A673 (cell line): ENCODE measurements at regions of chr20 and their contacts with region 1.

Region 1: DNA sequence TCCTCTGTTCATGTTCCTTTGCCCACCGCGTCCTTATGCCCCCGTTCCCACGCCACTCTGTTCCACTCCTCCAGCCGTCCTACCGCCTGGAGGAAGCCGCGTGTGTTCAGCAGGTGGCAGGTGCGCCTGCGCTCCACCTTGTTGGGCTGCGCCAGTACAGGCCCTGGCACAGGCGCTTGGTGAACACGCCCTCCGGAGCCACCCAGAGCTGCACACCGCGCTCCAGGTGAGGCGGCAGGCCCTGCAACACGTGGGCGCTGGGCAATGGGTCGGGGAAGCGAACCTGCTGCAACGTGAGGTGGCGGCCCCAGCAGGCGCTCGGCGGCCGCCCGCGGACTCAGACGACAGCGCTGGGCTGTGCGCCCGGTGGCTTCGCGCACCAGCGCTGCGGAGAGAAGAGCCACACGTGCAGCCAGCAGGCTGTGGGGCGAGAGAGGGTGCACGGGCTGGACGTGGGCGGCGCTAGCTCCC is 4.1 kb upstream of the FOXS1 start:
- DNase-seq: no peak
- H3K4me3 ChIP-seq: no peak overlapping the region
- H3K27ac ChIP-seq: no peak overlapping the region
- H3K4me1 ChIP-seq: no peaks in the 10 kb centered on the region
- H3K27me3 ChIP-seq: peaks cover 32% of the 10 kb centered on the region
- CTCF ChIP-seq: no peak

Region 2: GRCh38 chr20:31760519-31761240 is 88.8 kb before region 1 on chr20:
- CTCF ChIA-PET with region 1: no interaction called
- POLR2A ChIA-PET with region 1: no interaction called
- intact Hi-C with region 1: no loop called
- DNase-seq: no peak
- H3K4me3 ChIP-seq: no peak overlapping the region
- H3K27ac ChIP-seq: no peak overlapping the region
- H3K4me1 ChIP-seq: no peaks in the 10 kb centered on the region
- H3K27me3 ChIP-seq: no peaks in the 10 kb centered on the region
- CTCF ChIP-seq: no peak

Region 3: GRCh38 chr20:31822421-31823330 is 26.8 kb before region 1 on chr20:
- CTCF ChIA-PET with region 1: interaction called, 11 read pairs
- POLR2A ChIA-PET with region 1: no interaction called
- intact Hi-C with region 1: loop called (anchors 2 kb)
- DNase-seq: peak; percentile 77
- H3K4me3 ChIP-seq: no peak overlapping the region
- H3K27ac ChIP-seq: no peak overlapping the region
- H3K4me1 ChIP-seq: peaks cover 9% of the 10 kb centered on the region
- H3K27me3 ChIP-seq: no peaks in the 10 kb centered on the region
- CTCF ChIP-seq: peak; percentile 99

Region 4: DNA sequence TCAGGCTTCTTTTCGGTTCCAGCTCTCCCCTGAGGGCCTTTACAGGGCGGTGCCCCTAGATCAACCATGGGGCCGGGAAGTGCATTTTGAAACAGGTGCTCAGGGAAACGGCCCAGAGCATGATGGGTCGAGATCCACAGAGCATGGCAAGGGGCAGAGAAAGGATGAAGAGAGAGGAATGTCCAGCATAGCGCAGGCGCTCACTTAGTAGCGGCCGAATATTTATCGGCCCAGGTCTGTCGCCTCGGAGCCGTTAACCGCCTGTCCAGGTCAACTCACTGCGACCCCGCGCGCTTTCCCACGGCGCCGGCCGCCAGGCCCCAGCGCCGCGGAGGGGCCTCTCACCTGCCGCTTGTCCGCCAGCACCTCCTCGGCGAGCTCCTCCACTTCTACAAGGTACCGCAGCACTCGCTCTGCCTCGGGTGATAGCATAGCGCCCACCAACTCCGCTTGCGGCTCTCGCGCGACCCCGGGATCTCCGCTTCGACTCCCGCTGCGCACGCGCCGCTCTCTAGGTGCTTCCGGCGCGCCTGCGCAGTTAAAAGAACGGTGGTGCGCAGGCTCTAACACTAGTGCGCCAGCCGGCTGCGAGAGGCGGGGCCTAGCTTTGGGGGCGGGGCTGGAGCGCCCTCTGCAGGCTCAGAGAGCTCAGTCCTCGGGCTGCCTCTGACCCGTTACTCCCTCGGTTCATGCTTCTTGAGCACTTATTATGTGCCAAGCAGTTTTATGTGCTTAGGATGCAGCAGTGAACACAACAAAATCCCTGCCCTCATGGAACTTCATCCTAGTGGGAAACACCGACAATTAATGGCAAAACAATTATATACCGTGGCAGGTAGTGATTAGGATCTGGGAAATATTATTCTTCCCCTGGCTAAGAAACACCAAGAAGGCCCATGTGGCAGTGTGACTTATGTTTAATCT is 102.3 kb after region 1 on chr20 and contains the start of gene PDRG1:
- CTCF ChIA-PET with region 1: interaction called, 20 read pairs
- POLR2A ChIA-PET with region 1: interaction called, 6 read pairs
- intact Hi-C with region 1: loop called (anchors 1 kb)
- DNase-seq: peak; percentile 97
- H3K4me3 ChIP-seq: peak within 1 kb of the TSS; percentile 98
- H3K27ac ChIP-seq: peak within 1 kb of the TSS; percentile 84
- H3K4me1 ChIP-seq: peaks cover 8% of the 10 kb centered on the region
- H3K27me3 ChIP-seq: peaks cover 19% of the 10 kb centered on the region
- CTCF ChIP-seq: peak; percentile 99
- total RNA-seq, gene PDRG1: 18.7 and 24.3 TPM in 2 replicates

Region 5: GRCh38 chr20:32012159-32012688 is 162.7 kb after region 1 on chr20:
- CTCF ChIA-PET with region 1: interaction called, 12 read pairs
- POLR2A ChIA-PET with region 1: no interaction called
- intact Hi-C with region 1: no loop called
- DNase-seq: no peak
- H3K4me3 ChIP-seq: no peak overlapping the region
- H3K27ac ChIP-seq: no peak overlapping the region
- H3K4me1 ChIP-seq: peaks cover 5% of the 10 kb centered on the region
- H3K27me3 ChIP-seq: peaks cover 3% of the 10 kb centered on the region
- CTCF ChIP-seq: no peak

Region 6: GRCh38 chr20:32031007-32031958 is 181.8 kb after region 1 on chr20:
- CTCF ChIA-PET with region 1: interaction called, 13 read pairs
- POLR2A ChIA-PET with region 1: no interaction called
- intact Hi-C with region 1: loop called (anchors 1 kb)
- DNase-seq: peak; percentile 83
- H3K4me3 ChIP-seq: peak overlapping the region; percentile 39
- H3K27ac ChIP-seq: no peak overlapping the region
- H3K4me1 ChIP-seq: peaks cover 7% of the 10 kb centered on the region
- H3K27me3 ChIP-seq: peaks cover 1% of the 10 kb centered on the region
- CTCF ChIP-seq: peak; percentile 98

Region 7: GRCh38 chr20:32091888-32092346 is 242.4 kb after region 1 on chr20:
- CTCF ChIA-PET with region 1: interaction called, 3 read pairs
- POLR2A ChIA-PET with region 1: no interaction called
- intact Hi-C with region 1: loop called (anchors 2 kb)
- DNase-seq: peak; percentile 85
- H3K4me3 ChIP-seq: no peak overlapping the region
- H3K27ac ChIP-seq: no peak overlapping the region
- H3K4me1 ChIP-seq: no peaks in the 10 kb centered on the region
- H3K27me3 ChIP-seq: no peaks in the 10 kb centered on the region
- CTCF ChIP-seq: peak; percentile 96

Region 8: GRCh38 chr20:32445539-32446273 is 596.2 kb after region 1 on chr20:
- CTCF ChIA-PET with region 1: interaction called, 10 read pairs
- POLR2A ChIA-PET with region 1: no interaction called
- intact Hi-C with region 1: no loop called
- DNase-seq: no peak
- H3K4me3 ChIP-seq: no peak overlapping the region
- H3K27ac ChIP-seq: no peak overlapping the region
- H3K4me1 ChIP-seq: no peaks in the 10 kb centered on the region
- H3K27me3 ChIP-seq: no peaks in the 10 kb centered on the region
- CTCF ChIP-seq: no peak